ENCODE measurements at regions of chr17 and their contacts with region 1.

Region 1: GRCh38 chr17:35214631-35215273 is 20.6 kb upstream of the SLC35G3 start:
- DNase-seq: no peak
- H3K4me3 ChIP-seq: no peak overlapping the region
- H3K27ac ChIP-seq: peak overlapping the region in 2 of 4 donors; percentile 26 to 31
- H3K4me1 ChIP-seq: peaks cover 0 to 9% (median 3%) of the 10 kb centered on the region in 4 donors
- H3K27me3 ChIP-seq: peaks cover 0 to 3% (median 0%) of the 10 kb centered on the region in 4 donors
- CTCF ChIP-seq: no peak
- EP300 ChIP-seq: no peak
- POLR2A ChIP-seq: no peak

Region 2: GRCh38 chr17:35141681-35142466 is 72.9 kb before region 1 on chr17 and contains the start of gene NLE1:
- intact Hi-C with region 1: no loop called
- DNase-seq: no peak
- H3K4me3 ChIP-seq: peak within 1 kb of the TSS; percentile 70 to 91 (median 74)
- H3K27ac ChIP-seq: peak within 1 kb of the TSS in 3 of 4 donors; percentile 1 to 56 (median 39)
- H3K4me1 ChIP-seq: peaks cover 12 to 29% (median 23%) of the 10 kb centered on the region in 4 donors
- H3K27me3 ChIP-seq: no peaks in the 10 kb centered on the region
- CTCF ChIP-seq: peak; percentile 89 to 98 (median 96)
- EP300 ChIP-seq: no peak
- POLR2A ChIP-seq: no peak
- total RNA-seq, gene NLE1: 9.6 to 16.1 (median 13.8) TPM

Region 3: GRCh38 chr17:35154196-35155165 is 60.3 kb before region 1 on chr17:
- intact Hi-C with region 1: loop called (anchors 10 kb)
- DNase-seq: no peak
- H3K4me3 ChIP-seq: no peak overlapping the region
- H3K27ac ChIP-seq: no peak overlapping the region
- H3K4me1 ChIP-seq: peaks cover 0 to 4% (median 0%) of the 10 kb centered on the region in 4 donors
- H3K27me3 ChIP-seq: no peaks in the 10 kb centered on the region
- CTCF ChIP-seq: no peak
- EP300 ChIP-seq: no peak
- POLR2A ChIP-seq: no peak

Region 4: GRCh38 chr17:35299129-35299528 is 84.4 kb after region 1 on chr17:
- intact Hi-C with region 1: no loop called
- DNase-seq: no peak
- H3K4me3 ChIP-seq: no peak overlapping the region
- H3K27ac ChIP-seq: no peak overlapping the region
- H3K4me1 ChIP-seq: no peaks in the 10 kb centered on the region
- H3K27me3 ChIP-seq: no peaks in the 10 kb centered on the region
- CTCF ChIP-seq: no peak
- EP300 ChIP-seq: no peak
- POLR2A ChIP-seq: no peak

Measured in esophagus muscularis mucosa (tissue), 4 donors.